CD8-positive, alpha-beta memory T cell (primary cell): ENCODE measurements at regions of chr10 and their contacts with region 1.

Region 1: GRCh38 chr10:119542988-119543813 is 682 bp upstream of the RGS10 start:
- DNase-seq: peak; percentile 38 to 75 (median 57)
- H3K4me3 ChIP-seq: peak overlapping the region; percentile 76
- H3K4me3 Mint-ChIP-seq: peak overlapping the region; percentile 88 to 98 (median 92)
- H3K27ac ChIP-seq: peak overlapping the region; percentile 57
- H3K27ac Mint-ChIP-seq: peak overlapping the region; percentile 79 to 99 (median 87)
- H3K4me1 ChIP-seq: peaks cover 31% of the 10 kb centered on the region
- H3K4me1 Mint-ChIP-seq: peaks cover 31 to 46% (median 37%) of the 10 kb centered on the region in 3 donors
- H3K27me3 ChIP-seq: no peaks in the 10 kb centered on the region
- H3K27me3 Mint-ChIP-seq: peaks cover 0 to 12% of the 10 kb centered on the region in 2 donors

Region 2: DNA sequence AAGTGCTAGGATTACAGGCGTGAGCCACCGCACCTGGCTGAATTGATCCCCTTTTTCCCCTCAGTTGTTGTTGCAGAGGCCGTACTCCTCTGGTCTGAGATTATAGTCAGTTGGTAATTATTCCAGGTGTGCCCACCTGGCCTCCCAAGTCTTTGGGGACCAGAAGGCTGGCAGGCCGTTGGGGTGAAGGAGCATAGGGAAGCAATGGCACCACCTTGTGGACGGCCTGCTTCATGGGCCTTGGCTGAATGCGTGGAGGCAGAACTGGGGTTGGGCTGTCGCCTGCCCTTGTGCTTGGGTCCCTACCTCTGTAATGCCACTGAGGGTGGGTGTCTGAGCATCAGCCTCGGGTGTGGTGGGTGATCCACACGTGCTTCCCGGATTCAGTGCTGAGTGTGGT is 126.3 kb before region 1 on chr10:
- CTCF ChIA-PET with region 1: interaction called, 10 read pairs
- POLR2A ChIA-PET with region 1: no interaction called
- DNase-seq: peak; percentile 49 to 74 (median 52)
- H3K4me3 ChIP-seq: no peak overlapping the region
- H3K4me3 Mint-ChIP-seq: no peak overlapping the region
- H3K27ac ChIP-seq: no peak overlapping the region
- H3K27ac Mint-ChIP-seq: peak overlapping the region in 1 of 8 donors; percentile 57
- H3K4me1 ChIP-seq: no peaks in the 10 kb centered on the region
- H3K4me1 Mint-ChIP-seq: no peaks in the 10 kb centered on the region
- H3K27me3 ChIP-seq: no peaks in the 10 kb centered on the region
- H3K27me3 Mint-ChIP-seq: no peaks in the 10 kb centered on the region

Region 3: DNA sequence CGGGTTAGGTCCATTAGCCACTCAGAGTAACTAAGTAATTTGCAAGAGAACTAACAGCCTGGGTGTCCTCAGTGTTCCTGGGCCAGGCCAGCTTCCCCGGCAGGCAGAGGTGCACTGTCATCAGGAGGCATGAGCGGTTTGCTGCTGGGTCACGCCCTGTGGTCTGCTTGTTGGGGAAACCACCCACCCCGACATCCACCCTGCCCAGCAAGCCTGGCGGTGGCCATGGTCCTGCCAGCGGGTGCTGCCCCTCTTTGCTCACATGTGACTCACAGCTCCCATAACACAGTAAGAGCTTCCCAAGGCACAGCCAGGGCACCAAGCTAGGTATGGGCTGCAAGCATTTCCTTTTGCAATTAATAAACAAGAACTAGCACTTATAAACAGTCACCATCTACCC is 76.5 kb before region 1 on chr10:
- CTCF ChIA-PET with region 1: interaction called, 13 read pairs
- POLR2A ChIA-PET with region 1: no interaction called
- DNase-seq: peak; percentile 16 to 57 (median 26)
- H3K4me3 ChIP-seq: no peak overlapping the region
- H3K4me3 Mint-ChIP-seq: peak overlapping the region in 1 of 7 donors; percentile 10
- H3K27ac ChIP-seq: no peak overlapping the region
- H3K27ac Mint-ChIP-seq: peak overlapping the region in 2 of 8 donors; percentile 17 to 54
- H3K4me1 ChIP-seq: peaks cover 11% of the 10 kb centered on the region
- H3K4me1 Mint-ChIP-seq: peaks cover 9 to 21% (median 14%) of the 10 kb centered on the region in 3 donors
- H3K27me3 ChIP-seq: no peaks in the 10 kb centered on the region
- H3K27me3 Mint-ChIP-seq: peaks cover 4 to 5% of the 10 kb centered on the region in 2 donors

Region 4: DNA sequence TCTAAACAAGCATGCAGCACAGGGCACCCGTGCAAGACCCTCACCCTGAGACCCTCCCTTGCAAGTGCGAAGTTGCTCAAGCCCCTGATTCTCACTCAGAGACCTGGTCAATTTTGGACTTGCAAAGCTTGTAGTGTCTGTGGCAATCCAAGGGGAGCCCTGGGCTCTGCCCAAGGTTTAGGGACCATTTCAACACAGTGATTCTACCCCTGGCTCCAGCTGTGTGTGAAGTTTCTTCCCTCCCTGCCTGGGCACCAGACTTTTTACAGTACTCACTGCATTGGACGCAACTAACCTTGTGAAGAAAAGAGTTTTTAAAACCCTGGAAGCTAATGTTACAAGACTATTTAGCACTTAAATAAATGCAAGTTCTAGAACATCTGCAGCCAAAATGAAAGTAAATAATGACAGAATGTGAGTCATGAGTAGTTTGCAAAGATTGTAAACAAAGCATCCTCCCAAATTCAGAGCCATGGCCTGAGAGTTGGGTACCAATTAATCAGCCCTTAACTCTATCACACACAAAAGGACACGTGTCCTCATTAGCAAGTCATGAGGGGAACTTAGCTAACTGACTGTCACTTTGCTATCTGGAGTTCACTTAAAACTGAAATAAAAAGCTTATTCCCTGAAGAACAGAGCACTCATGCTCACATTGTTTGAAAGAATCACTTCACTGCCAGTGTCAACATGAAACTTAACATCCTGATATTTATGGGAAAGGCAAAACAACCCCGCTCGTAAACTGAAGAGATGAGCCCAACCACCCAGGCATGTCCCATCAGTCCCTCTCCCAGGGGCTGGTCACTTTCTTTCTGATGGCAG is 48.8 kb before region 1 on chr10:
- CTCF ChIA-PET with region 1: interaction called, 17 read pairs
- POLR2A ChIA-PET with region 1: interaction called, 3 read pairs
- DNase-seq: no peak
- H3K4me3 ChIP-seq: no peak overlapping the region
- H3K4me3 Mint-ChIP-seq: peak overlapping the region in 5 of 7 donors; percentile 10 to 52 (median 24)
- H3K27ac ChIP-seq: no peak overlapping the region
- H3K27ac Mint-ChIP-seq: peak overlapping the region; percentile 56 to 94 (median 90)
- H3K4me1 ChIP-seq: peaks cover 51% of the 10 kb centered on the region
- H3K4me1 Mint-ChIP-seq: peaks cover 49 to 71% (median 58%) of the 10 kb centered on the region in 3 donors
- H3K27me3 ChIP-seq: no peaks in the 10 kb centered on the region
- H3K27me3 Mint-ChIP-seq: no peaks in the 10 kb centered on the region

Region 5: DNA sequence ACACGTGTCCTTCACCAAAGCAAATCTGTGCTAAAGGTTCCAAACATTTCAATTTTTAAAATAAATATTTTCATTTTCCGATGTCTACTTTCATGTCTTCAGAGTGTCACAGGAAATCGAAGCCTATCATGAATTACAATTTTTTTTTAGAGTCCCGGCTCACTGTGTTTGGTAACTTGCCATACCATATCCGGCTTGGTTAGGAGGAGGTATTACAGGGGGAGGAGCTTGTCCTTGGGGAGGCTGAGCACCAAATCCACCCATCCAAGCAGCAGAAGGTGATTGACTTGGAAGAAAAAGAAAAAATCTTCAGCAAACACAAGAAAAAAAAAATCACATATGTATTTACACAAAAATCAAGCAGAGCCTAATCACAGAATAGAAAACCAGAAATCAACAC is 32.3 kb after region 1 on chr10:
- CTCF ChIA-PET with region 1: interaction called, 12 read pairs
- POLR2A ChIA-PET with region 1: interaction called, 3 read pairs
- DNase-seq: peak in 3 of 5 donors; percentile 23 to 58 (median 57)
- H3K4me3 ChIP-seq: no peak overlapping the region
- H3K4me3 Mint-ChIP-seq: peak overlapping the region in 3 of 7 donors; percentile 20 to 72 (median 57)
- H3K27ac ChIP-seq: no peak overlapping the region
- H3K27ac Mint-ChIP-seq: peak overlapping the region; percentile 37 to 94 (median 84)
- H3K4me1 ChIP-seq: peaks cover 21% of the 10 kb centered on the region
- H3K4me1 Mint-ChIP-seq: peaks cover 21 to 27% (median 27%) of the 10 kb centered on the region in 3 donors
- H3K27me3 ChIP-seq: no peaks in the 10 kb centered on the region
- H3K27me3 Mint-ChIP-seq: no peaks in the 10 kb centered on the region